ENCODE measurements at regions of chr3 and their contacts with region 1.

Region 1: DNA sequence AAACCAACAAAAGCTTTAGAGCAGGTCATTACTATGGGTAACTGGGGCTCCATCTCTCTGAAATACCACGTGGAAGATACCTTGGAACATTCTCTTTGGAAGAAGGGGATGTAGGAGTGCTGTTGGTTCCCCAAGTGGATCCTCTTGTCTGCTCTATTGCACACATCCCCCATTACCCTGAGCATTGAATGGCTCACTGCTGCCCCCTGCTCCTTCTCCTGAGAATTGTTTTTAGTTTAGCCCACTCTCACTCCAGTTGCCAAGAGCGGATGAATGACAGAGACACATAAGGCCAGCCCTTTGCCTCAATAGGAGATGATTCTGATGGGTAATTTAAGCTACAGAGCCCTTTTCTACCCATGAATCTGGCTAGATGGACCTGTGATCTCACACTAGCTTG is 135.6 kb upstream of the SUCLG2 start:
- DNase-seq: peak; percentile 30 to 77 (median 48)
- H3K4me3 ChIP-seq: no peak overlapping the region
- H3K27ac ChIP-seq: no peak overlapping the region
- H3K4me1 ChIP-seq: no peaks in the 10 kb centered on the region
- H3K27me3 ChIP-seq: no peaks in the 10 kb centered on the region
- CTCF ChIP-seq: peak; percentile 46 to 80 (median 74)
- POLR2A ChIP-seq: no peak

Region 2: DNA sequence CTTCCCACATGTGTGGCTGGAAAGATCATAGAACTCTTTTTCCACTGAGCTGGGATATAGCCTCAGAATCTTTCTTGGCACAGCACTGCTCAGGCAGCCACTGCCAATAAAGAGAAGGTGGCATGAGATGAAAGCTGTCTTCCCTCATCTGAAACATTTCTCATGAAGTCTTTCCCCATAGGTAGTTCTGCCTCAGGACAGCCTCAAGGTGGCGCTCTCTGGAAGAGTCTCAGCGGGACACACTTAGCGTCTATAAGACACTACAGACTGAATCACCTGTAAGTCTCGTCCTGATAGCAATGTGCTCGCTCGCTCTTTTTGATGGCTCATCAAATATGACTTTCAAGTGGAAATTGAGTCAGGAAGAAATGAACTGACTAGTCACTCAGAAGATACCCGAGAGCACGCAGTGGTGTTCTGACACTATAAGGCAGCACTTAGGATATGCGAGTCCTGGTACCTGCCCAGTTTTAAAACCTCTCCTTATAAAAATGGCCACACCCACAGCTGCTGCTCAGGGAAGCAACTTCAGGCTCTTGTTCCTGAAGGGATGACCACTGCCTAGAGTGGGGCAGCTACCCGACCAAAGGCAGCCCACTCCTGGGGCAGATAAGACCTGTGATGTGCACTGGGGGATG is 405.2 kb before region 1 on chr3:
- intact Hi-C with region 1: loop called (anchors 5 kb)
- DNase-seq: peak in 6 of 7 donors; percentile 27 to 70 (median 46)
- H3K4me3 ChIP-seq: no peak overlapping the region
- H3K27ac ChIP-seq: no peak overlapping the region
- H3K4me1 ChIP-seq: peaks cover 0 to 35% of the 10 kb centered on the region in 2 donors
- H3K27me3 ChIP-seq: no peaks in the 10 kb centered on the region
- CTCF ChIP-seq: peak; percentile 21 to 55 (median 40)
- POLR2A ChIP-seq: no peak

Region 3: DNA sequence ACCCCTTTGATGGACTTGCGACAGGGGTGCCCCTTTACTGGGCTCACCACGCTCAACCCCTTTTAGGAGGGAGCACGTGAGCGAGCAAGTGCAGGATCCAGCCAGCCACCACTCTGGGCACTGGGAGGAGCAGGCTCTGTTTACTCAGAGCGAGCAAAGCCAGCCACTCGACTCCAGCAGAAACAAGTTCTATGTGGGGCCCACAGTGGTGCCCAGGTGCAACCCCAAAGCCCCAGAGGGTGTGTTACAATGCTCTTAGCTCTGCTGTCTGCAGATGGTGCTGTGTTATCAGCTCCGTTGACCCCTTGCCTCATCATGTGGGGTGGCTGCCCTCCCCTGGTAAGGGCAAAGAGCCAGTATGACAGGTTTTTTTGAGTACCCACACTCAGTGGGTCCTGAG is 15.4 kb before region 1 on chr3:
- intact Hi-C with region 1: loop called in 1 of 2 experiments (anchors 2 kb)
- DNase-seq: no peak
- H3K4me3 ChIP-seq: no peak overlapping the region
- H3K27ac ChIP-seq: no peak overlapping the region
- H3K4me1 ChIP-seq: no peaks in the 10 kb centered on the region
- H3K27me3 ChIP-seq: no peaks in the 10 kb centered on the region
- CTCF ChIP-seq: no peak
- POLR2A ChIP-seq: no peak